ENCODE measurements at regions of chr1 and their contacts with region 1.

Region 1: GRCh38 chr1:3618881-3619671 is 5.7 kb upstream of the TPRG1L start:
- DNase-seq: peak; percentile 68 to 80
- ATAC-seq: peak; percentile 84

Region 2: DNA sequence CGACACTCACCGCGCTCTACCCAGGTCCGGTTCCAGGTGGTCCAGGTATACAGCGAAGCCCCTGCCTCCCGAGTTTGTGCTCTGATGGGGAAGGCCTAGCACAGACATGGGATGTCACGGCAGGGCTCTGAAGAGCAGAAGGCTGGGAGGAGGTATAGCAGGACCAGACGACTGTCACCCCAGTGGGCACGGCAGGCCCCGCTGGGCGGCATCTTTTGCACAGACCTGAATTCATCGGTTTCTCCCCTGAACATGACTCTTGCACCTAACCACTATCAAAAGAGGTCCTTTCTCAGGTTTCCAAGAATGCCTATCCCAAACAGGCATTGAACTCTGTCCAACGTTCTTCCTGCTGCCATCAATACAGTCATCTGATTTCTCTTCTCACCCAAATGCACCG is 134.1 kb before region 1 on chr1:
- intact Hi-C with region 1: loop called (anchors 5 kb)
- DNase-seq: no peak
- ATAC-seq: no peak

Region 3: GRCh38 chr1:3564921-3565827 is 53.9 kb before region 1 on chr1:
- intact Hi-C with region 1: loop called in 1 of 2 experiments (anchors 5 kb)
- DNase-seq: no peak
- ATAC-seq: peak; percentile 53

Measured in left colon (tissue), 2 donors.